K562 (cell line): ENCODE measurements at regions of chr4 and their contacts with region 1.

Region 1: GRCh38 chr4:140861359-140862176 is 105.4 kb upstream of the TBC1D9 start:
- DNase-seq: peak; percentile 35 to 70 (median 40)
- ATAC-seq: peak; percentile 81
- H3K4me3 ChIP-seq: no peak overlapping the region
- H3K27ac ChIP-seq: no peak overlapping the region
- H3K4me1 ChIP-seq: no peaks in the 10 kb centered on the region; a peak in 1 of 5 replicates
- H3K27me3 ChIP-seq: peaks cover 0 to 3% of the 10 kb centered on the region in 2 experiments; a peak in 2 of 5 replicates
- CTCF ChIP-seq: peak; percentile 51 to 79 (median 61)
- EP300 ChIP-seq: no peak
- POLR2A ChIP-seq: no peak
- RAD21 ChIP-seq: peak; percentile 76 to 85

Region 2: GRCh38 chr4:140884431-140885058 is 23.0 kb after region 1 on chr4:
- CTCF ChIA-PET with region 1: no interaction called
- POLR2A ChIA-PET with region 1: no interaction called
- in situ Hi-C with region 1: no loop called
- intact Hi-C with region 1: loop called (anchors 1 kb)
- DNase-seq: peak; percentile 29 to 64 (median 36)
- ATAC-seq: peak; percentile 87
- H3K4me3 ChIP-seq: no peak overlapping the region
- H3K27ac ChIP-seq: no peak overlapping the region
- H3K4me1 ChIP-seq: no peaks in the 10 kb centered on the region
- H3K27me3 ChIP-seq: no peaks in the 10 kb centered on the region
- CTCF ChIP-seq: peak; percentile 55 to 69 (median 60); a peak in 5 of 6 replicates
- EP300 ChIP-seq: no peak
- POLR2A ChIP-seq: no peak
- RAD21 ChIP-seq: peak; percentile 50 to 69

Region 3: DNA sequence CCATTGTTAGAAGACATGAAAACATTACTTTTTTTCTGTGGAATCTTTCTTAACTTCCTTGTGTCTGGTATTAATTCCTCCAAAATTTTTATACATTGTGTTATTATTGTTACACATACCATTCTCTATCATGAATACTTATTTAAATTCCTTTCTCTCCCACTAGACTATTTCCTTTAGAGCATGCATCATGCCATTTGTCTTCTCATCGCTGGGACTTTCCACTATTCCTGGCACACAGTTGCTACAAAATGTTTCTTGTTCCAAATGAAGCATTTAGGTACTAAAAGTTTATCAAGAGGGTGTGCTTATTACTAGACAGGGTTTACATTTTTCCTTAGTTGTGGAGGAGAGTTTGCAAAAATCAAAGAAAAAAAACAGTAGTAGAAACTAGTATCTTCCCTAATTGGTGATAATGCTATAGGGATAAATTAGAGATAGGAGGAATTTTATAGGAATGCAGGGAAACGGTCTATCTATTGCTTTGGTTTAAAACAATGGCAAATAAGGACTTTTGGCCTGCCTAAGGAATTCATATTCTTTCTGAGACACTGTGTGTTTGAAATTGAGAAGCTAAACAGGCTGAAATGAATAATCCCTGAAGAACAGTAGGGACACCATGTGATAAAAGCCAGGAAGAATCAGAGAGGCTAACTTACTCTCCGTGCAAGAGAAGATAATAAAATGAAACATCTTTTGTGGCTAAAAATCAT is 82.1 kb after region 1 on chr4:
- CTCF ChIA-PET with region 1: no interaction called
- POLR2A ChIA-PET with region 1: no interaction called
- in situ Hi-C with region 1: no loop called
- intact Hi-C with region 1: no loop called
- DNase-seq: no peak
- ATAC-seq: no peak
- H3K4me3 ChIP-seq: no peak overlapping the region
- H3K27ac ChIP-seq: no peak overlapping the region
- H3K4me1 ChIP-seq: no peaks in the 10 kb centered on the region
- H3K27me3 ChIP-seq: no peaks in the 10 kb centered on the region; a peak in 1 of 5 replicates
- CTCF ChIP-seq: no peak
- EP300 ChIP-seq: no peak
- POLR2A ChIP-seq: no peak
- RAD21 ChIP-seq: no peak

Region 4: GRCh38 chr4:141133146-141133998 is 271.8 kb after region 1 on chr4 and contains the start of gene RNF150:
- CTCF ChIA-PET with region 1: interaction called, 5 read pairs
- POLR2A ChIA-PET with region 1: no interaction called
- in situ Hi-C with region 1: loop called (anchors 10 kb)
- intact Hi-C with region 1: loop called (anchors 1 kb)
- DNase-seq: peak; percentile 27 to 51 (median 36)
- ATAC-seq: peak; percentile 83
- H3K4me3 ChIP-seq: no peak within 1 kb of the TSS
- H3K27ac ChIP-seq: no peak within 1 kb of the TSS
- H3K4me1 ChIP-seq: peaks cover 0 to 7% of the 10 kb centered on the region in 2 experiments; a peak in 1 of 5 replicates
- H3K27me3 ChIP-seq: peaks cover 6 to 16% of the 10 kb centered on the region in 2 experiments; a peak in 3 of 5 replicates
- CTCF ChIP-seq: peak; percentile 48 to 59 (median 51); a peak in 5 of 6 replicates
- EP300 ChIP-seq: no peak
- POLR2A ChIP-seq: no peak
- RAD21 ChIP-seq: peak in 1 of 2 experiments; percentile 35; a peak in 2 of 4 replicates
- polyA plus RNA-seq, gene RNF150: not detected